Esophagus squamous epithelium (tissue), 5 donors: ENCODE measurements at regions of chrX and their contacts with region 1.

Region 1: DNA sequence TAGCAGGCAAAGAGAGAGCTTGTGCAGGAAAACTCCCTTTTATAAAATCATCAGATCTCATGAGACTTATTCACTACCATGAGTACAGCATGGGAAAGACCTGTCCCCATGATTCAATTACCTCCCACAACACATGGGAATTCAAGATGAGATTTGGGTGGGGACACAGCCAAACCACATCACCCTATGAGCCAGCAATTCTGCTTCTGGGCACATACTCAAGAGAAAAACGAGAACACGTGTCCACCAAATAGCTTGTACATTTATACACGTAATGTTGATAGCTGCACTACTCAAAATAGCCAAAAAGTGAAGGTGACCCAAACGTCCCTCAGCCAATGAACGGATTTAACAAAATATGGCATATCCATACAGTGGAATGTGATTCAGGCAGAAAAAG is 94.5 kb upstream of the DHRSX start:
- DNase-seq: no peak
- H3K4me3 ChIP-seq: no peak overlapping the region
- H3K27ac ChIP-seq: no peak overlapping the region
- H3K4me1 ChIP-seq: peaks cover 0 to 51% (median 0%) of the 10 kb centered on the region in 3 donors
- H3K27me3 ChIP-seq: no peaks in the 10 kb centered on the region
- CTCF ChIP-seq: no peak
- POLR2A ChIP-seq: no peak

Region 2: DNA sequence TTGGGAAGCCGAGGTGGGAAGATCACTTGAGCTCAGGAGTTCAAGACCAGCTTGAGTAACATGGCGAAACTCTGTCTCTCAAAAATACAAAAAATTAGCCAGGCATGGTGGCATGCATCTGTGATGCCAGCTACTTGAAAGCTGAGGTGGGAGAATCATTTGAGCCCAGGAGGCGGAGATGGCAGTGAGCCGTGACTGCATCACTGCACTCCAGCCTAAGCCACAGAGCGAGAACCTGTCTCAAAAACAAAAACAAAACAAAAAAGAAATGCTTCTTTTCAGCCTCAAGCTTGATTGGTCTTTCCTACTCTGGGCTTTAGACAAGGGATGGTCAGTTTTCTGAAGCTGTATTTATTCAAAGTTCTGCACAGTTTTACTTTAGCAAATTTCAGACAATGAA is 78.6 kb before region 1 on chrX:
- intact Hi-C with region 1: loop called (anchors 10 kb)
- DNase-seq: no peak
- H3K4me3 ChIP-seq: no peak overlapping the region
- H3K27ac ChIP-seq: no peak overlapping the region
- H3K4me1 ChIP-seq: no peaks in the 10 kb centered on the region
- H3K27me3 ChIP-seq: no peaks in the 10 kb centered on the region
- CTCF ChIP-seq: no peak
- POLR2A ChIP-seq: no peak

Region 3: DNA sequence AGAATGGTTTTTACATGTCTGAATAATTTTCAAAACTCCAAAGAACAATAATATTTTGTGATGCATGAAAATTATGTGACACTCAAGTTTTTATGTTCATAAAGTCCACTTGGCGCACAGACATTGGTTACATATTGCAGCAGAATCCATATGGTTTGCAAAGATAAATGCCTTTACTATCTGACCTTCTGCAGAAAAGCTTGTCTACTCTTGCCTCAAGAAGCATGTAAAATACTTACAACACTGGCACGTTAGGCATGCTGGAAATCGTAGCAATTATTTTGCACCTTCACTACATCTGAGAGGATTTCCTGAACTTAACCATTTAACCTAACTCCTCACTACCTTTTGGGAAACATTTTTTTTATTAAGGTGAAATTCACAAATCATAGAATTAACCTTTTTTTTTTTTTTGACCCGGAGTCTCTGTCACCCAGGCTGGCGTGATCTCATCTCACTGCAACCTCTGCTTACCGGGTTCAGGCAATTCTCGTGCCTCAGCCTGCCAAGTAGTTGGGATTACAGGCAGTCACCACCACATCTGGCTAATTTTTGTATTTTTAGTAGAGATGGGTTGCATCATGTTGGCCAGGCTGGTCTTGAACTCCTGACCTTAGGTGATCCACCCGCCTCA is 153.0 kb after region 1 on chrX:
- intact Hi-C with region 1: no loop called
- DNase-seq: no peak
- H3K4me3 ChIP-seq: no peak overlapping the region
- H3K27ac ChIP-seq: no peak overlapping the region
- H3K4me1 ChIP-seq: peaks cover 0 to 33% (median 0%) of the 10 kb centered on the region in 3 donors
- H3K27me3 ChIP-seq: no peaks in the 10 kb centered on the region
- CTCF ChIP-seq: no peak
- POLR2A ChIP-seq: no peak